Mammary epithelial cell (primary cell): ENCODE measurements at regions of chr21 and their contacts with region 1.

Region 1: GRCh38 chr21:36369064-36369685 is 16.0 kb upstream of the CHAF1B start:
- DNase-seq: no peak
- H3K4me3 ChIP-seq: no peak overlapping the region
- H3K27ac ChIP-seq: no peak overlapping the region
- H3K4me1 ChIP-seq: no peaks in the 10 kb centered on the region
- H3K27me3 ChIP-seq: no peaks in the 10 kb centered on the region
- CTCF ChIP-seq: no peak

Region 2: GRCh38 chr21:36122977-36123376 is 246.2 kb before region 1 on chr21:
- CTCF ChIA-PET with region 1: no interaction called
- dilution Hi-C with region 1: loop called (anchors 5 kb)
- in situ Hi-C with region 1: no loop called
- intact Hi-C with region 1: no loop called
- DNase-seq: no peak
- H3K4me3 ChIP-seq: no peak overlapping the region
- H3K27ac ChIP-seq: no peak overlapping the region
- H3K4me1 ChIP-seq: peaks cover 10% of the 10 kb centered on the region
- H3K27me3 ChIP-seq: no peaks in the 10 kb centered on the region
- CTCF ChIP-seq: peak in 1 of 2 donors; percentile 48

Region 3: GRCh38 chr21:36246080-36246631 is 123.0 kb before region 1 on chr21:
- CTCF ChIA-PET with region 1: no interaction called
- dilution Hi-C with region 1: no loop called
- in situ Hi-C with region 1: no loop called
- intact Hi-C with region 1: no loop called
- DNase-seq: no peak
- H3K4me3 ChIP-seq: no peak overlapping the region
- H3K27ac ChIP-seq: no peak overlapping the region
- H3K4me1 ChIP-seq: no peaks in the 10 kb centered on the region
- H3K27me3 ChIP-seq: no peaks in the 10 kb centered on the region
- CTCF ChIP-seq: no peak

Region 4: DNA sequence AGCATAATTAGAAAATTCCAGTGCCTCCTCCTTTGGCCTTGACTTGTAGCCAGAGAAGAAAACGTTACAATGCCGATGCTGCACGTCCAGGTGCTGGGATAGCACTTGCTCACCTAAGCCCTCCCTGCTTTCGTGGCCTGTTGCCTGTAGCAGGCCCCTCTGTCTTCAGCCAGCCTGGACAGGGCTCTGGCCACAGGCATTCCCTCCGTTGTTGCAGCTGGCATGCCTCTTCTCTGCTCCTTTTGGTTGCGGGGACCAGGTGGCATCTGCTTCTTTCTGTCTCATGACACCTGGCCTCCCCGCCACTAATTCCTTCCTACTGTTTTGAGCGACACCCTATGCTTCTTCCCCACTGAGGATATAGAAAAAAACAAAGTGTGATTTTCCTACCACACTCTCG is 103.7 kb before region 1 on chr21:
- CTCF ChIA-PET with region 1: no interaction called
- dilution Hi-C with region 1: loop called (anchors 5 kb)
- in situ Hi-C with region 1: no loop called
- intact Hi-C with region 1: no loop called
- DNase-seq: no peak
- H3K4me3 ChIP-seq: no peak overlapping the region
- H3K27ac ChIP-seq: no peak overlapping the region
- H3K4me1 ChIP-seq: peaks cover 9% of the 10 kb centered on the region
- H3K27me3 ChIP-seq: no peaks in the 10 kb centered on the region
- CTCF ChIP-seq: no peak

Region 5: DNA sequence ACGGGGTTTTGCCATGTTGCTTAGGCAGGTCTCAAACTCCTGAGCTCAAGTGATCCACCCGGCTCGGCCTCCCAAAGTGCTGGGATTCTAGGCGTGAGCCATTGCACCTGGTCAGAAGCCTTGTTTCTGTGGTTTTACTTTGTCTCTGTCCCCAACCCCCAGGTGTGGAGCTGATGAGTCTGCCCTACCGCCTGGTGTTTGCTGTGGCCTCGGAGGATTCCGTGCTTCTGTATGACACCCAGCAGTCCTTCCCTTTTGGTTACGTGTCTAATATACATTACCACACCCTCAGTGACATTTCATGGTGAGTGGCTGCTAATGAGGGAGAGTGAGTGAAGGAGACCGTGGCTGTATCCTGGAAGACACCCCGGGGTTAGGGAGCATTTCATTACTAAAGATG is 42.1 kb after region 1 on chr21:
- CTCF ChIA-PET with region 1: no interaction called
- dilution Hi-C with region 1: loop called (anchors 5 kb)
- in situ Hi-C with region 1: no loop called
- intact Hi-C with region 1: no loop called
- DNase-seq: no peak
- H3K4me3 ChIP-seq: no peak overlapping the region
- H3K27ac ChIP-seq: no peak overlapping the region
- H3K4me1 ChIP-seq: no peaks in the 10 kb centered on the region
- H3K27me3 ChIP-seq: no peaks in the 10 kb centered on the region
- CTCF ChIP-seq: no peak